Activated CD4-positive, alpha-beta T cell treated with anti-CD3 and anti-CD28 coated beads for 36 hours (primary cell): ENCODE measurements at regions of chr4 and their contacts with region 1.

Region 1: DNA sequence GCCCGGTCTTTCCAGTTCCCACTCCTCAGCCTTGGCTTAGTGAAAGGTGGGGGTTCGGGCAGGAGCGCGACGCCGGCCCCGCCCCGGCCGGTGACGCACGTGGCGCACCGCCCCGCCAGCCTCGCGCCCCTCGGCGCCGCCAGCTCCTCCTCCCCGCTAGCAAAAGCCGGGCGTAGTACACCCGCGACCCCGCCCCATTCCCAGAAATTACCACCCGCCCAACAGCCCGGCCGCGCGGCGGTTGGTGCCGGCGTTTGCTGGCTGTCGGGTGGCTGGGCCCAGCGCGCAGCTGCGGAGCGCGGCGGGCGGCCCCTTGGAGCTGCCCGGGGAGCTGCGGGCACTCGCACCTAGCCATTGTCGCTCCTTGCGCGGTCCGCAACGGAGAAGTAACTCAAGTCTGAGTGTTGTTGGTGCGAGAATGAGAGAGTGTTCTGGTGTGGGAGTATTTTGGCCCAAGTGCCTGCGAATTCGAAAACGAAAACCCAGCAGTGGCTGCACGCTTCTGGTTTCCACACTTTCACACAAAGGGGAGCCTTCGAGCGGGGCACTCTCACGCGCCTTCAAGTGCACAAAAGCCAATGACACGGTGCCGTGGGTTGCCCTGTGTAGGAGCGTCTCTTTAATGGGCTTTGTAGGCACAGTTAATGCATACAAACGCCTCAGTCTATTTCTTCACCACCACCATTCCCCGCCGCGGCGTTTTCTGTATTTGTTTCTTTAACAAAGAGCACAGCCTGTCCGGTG is 1.0 kb upstream of the ELF2 start:
- DNase-seq: peak; percentile 95
- ATAC-seq: peak; percentile 77
- H3K4me3 Mint-ChIP-seq: peak overlapping the region; percentile 81
- H3K27ac Mint-ChIP-seq: peak overlapping the region; percentile 72
- H3K4me1 Mint-ChIP-seq: peaks cover 12% of the 10 kb centered on the region
- H3K27me3 Mint-ChIP-seq: peaks cover 12% of the 10 kb centered on the region

Region 2: DNA sequence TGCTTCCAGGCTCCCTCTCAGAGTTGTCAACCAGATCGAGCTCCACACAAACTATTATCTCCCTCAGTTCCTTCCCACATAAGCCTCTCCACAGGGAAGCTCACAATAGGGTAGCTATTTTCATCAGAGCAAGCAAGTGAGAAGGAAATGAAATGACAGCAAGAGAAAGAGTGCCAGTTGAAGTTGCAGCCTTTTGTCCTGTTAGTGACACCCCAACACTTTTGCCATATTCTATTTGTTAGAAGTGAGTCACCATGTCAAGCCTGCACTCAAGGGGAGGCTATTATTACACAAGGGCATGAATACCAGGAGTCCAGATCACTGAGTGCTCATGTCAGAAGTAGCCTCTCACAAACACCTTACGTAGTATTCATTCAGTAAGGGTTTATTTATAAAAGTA is 428.7 kb before region 1 on chr4:
- CTCF ChIA-PET with region 1: no interaction called
- POLR2A ChIA-PET with region 1: no interaction called
- intact Hi-C with region 1: no loop called
- DNase-seq: no peak
- ATAC-seq: no peak
- H3K4me3 Mint-ChIP-seq: no peak overlapping the region
- H3K27ac Mint-ChIP-seq: no peak overlapping the region
- H3K4me1 Mint-ChIP-seq: no peaks in the 10 kb centered on the region
- H3K27me3 Mint-ChIP-seq: peaks cover 2% of the 10 kb centered on the region

Region 3: DNA sequence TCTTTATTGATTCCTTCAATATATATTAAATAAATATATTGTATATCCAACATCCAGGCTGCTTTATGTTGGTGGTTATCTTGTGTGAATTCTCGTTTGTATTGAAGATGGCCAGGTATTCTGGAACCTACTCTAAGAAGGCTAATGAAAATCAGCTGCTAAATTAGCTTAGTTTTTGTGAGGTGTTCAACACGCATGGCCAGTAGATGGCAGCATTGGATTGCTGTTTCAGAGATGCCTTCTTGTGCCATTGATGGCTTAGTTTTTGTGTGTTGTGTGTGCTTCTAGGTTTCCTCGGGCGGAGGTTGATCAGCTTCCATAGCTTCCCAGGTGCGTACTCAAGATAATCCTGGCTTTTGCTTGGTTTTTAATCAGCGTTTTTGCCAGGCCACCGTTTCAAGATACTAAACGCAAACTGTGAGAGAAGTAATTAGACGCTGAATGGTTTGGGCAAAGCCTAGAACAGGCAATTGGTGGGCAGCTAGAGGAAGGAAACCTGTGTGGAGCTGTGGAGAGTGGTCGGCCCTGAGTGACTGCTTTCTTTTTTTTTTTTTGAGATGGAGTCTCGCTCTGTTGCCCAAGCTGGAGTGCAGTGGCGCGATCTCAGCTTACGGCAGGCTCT is 147.3 kb before region 1 on chr4:
- CTCF ChIA-PET with region 1: interaction called, 9 read pairs
- POLR2A ChIA-PET with region 1: no interaction called
- intact Hi-C with region 1: loop called in 1 of 2 experiments (anchors 5 kb)
- DNase-seq: peak; percentile 83
- ATAC-seq: peak; percentile 76
- H3K4me3 Mint-ChIP-seq: no peak overlapping the region
- H3K27ac Mint-ChIP-seq: peak overlapping the region; percentile 3
- H3K4me1 Mint-ChIP-seq: peaks cover 8% of the 10 kb centered on the region
- H3K27me3 Mint-ChIP-seq: no peaks in the 10 kb centered on the region

Region 4: DNA sequence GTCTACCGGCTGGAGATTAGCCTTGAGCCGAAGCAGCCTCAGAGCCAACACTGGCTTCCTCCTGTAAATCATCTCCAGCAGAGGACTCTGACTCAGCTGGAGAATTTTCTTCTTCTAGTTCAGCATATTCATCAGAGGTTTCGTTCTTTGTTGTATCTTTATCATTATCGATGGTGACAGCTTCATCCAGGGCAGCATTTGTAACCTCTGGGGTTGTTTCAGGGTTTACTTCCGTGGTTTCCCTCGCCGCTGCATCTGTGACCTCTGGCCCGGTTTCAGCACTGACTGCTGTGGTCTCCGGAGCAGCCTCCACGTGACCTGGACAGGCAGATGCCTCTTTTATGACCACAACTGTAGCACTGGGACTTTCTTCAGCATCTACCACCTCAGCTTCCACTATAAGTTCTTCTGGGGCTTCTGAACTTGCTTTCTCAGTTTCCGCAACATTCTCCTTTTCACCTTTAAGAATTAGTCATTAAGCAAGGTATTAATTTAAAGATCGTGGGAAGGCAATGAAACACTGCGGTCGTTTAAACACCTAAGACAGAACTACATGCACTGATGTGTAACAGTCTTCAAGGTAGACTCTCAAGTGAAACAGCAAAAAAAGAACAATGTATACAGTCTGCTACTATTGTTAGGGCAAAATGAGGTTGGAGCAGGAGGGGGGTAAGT is 88.7 kb after region 1 on chr4:
- CTCF ChIA-PET with region 1: no interaction called
- POLR2A ChIA-PET with region 1: interaction called, 8 read pairs
- intact Hi-C with region 1: loop called (anchors 1 kb)
- DNase-seq: peak; percentile 92
- ATAC-seq: peak; percentile 97
- H3K4me3 Mint-ChIP-seq: peak overlapping the region; percentile 25
- H3K27ac Mint-ChIP-seq: peak overlapping the region; percentile 81
- H3K4me1 Mint-ChIP-seq: peaks cover 27% of the 10 kb centered on the region
- H3K27me3 Mint-ChIP-seq: no peaks in the 10 kb centered on the region

Region 5: DNA sequence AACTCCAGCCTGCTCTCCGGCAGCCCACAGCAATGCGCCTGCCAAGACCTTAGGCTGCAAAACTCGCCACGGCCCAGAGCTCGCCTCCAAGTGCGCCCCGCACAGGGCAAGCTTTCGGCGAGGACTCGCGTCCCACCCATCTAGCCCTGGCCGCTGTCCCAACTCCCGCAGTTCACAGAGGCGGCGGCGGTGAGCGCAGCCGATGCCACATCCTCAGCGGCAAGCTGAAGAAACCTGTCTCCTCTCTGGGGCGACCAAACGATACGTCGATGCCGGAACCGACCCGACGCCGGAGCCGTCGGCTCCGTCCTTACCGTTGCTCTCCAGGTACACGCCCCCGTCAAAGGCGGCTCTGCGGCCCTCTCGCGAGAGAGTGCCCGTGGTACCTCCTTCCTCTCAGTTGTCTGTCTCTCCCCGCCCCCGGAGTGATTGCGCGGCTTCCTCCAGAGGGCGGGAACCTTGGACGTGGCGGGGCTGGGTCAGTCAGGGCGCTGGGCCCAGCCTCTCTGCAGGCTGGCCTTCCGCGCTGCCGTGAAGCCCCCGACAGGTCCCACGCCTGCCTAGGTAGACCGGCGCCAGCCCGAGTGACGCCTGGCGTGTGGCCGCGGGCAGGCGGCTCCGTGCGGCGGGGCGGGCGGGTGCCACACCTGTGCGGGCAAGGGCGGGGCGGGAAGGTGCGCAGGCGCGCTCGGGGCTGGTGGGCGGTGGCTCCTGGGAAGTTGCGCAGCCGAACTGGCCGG is 275.5 kb after region 1 on chr4:
- CTCF ChIA-PET with region 1: no interaction called
- POLR2A ChIA-PET with region 1: no interaction called
- intact Hi-C with region 1: loop called in 1 of 2 experiments (anchors 1 kb)
- DNase-seq: peak; percentile 99
- ATAC-seq: peak; percentile 90
- H3K4me3 Mint-ChIP-seq: peak overlapping the region; percentile 91
- H3K27ac Mint-ChIP-seq: peak overlapping the region; percentile 98
- H3K4me1 Mint-ChIP-seq: peaks cover 48% of the 10 kb centered on the region
- H3K27me3 Mint-ChIP-seq: no peaks in the 10 kb centered on the region

Region 6: DNA sequence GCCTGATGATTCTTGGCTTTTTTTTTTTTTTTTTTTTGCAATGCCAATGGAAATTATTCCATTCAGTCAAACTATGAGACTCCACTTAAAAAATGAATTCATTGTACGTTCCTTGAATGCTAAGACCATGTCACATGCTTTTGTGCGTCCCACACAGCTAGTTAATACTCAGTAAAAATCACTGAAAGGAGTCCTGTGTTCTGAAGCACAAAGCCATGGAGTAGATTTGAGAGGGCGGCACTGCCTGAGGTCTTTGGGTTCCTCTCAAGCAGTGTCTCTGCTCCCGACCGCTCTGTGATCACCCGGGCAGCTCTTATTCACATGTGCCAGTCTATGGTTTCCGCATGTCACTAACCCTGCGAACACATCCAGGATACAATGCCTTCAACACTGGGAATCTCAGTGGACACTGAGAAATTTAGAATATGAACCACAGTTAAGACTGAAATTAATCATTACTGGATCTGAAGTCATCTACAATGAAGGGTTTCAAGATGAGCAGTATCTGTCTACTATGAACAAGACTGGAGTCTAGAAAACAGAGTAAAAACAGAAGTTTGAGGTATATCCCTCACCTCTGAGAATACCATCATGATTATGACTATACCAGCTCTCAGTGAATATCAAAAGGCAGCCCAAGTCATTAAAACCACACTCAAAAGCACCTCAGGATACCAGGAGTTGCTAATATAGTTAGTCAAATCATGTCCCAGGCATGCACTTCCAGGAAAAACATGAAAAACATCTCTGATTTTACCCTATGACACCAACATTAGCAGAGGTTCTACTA is 680.6 kb after region 1 on chr4:
- CTCF ChIA-PET with region 1: no interaction called
- POLR2A ChIA-PET with region 1: no interaction called
- intact Hi-C with region 1: loop called in 1 of 2 experiments (anchors 5 kb)
- DNase-seq: peak; percentile 55
- ATAC-seq: peak; percentile 94
- H3K4me3 Mint-ChIP-seq: no peak overlapping the region
- H3K27ac Mint-ChIP-seq: no peak overlapping the region
- H3K4me1 Mint-ChIP-seq: peaks cover 32% of the 10 kb centered on the region
- H3K27me3 Mint-ChIP-seq: peaks cover 33% of the 10 kb centered on the region